Activated CD8-positive, alpha-beta T cell treated with anti-CD3 and anti-CD28 coated beads, Interleukin-2, amount 10 ng/mL, durations not matched to agents 7 days and 5 days (primary cell): ENCODE measurements at regions of chr1 and their contacts with region 1.

Region 1: DNA sequence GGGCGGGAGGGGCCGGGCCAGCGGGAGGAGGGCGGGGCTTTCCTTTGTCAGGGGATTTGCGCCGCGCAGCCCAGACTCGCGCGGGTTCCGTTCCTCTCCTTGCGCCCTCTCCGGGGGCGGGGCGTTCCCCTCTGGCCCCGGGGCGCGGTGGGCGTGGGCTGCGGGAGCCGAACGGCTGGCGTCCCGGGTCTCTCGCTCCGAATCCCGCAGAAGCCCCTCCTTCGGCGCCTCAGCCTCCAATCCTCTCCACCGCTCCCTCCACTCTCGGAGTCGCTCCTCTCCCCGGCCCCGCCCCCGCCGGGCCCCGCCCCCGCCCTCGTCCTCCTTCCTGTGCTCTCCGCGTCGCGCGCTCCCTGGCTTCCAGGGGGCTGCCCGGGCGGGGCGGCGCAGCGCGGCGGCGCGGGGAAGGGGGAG is 82.8 kb upstream of the BMP8A start:
- DNase-seq: peak; percentile 89
- ATAC-seq: peak; percentile 89
- H3K4me3 Mint-ChIP-seq: peak overlapping the region; percentile 84
- H3K27ac Mint-ChIP-seq: no peak overlapping the region
- H3K4me1 Mint-ChIP-seq: peaks cover 51% of the 10 kb centered on the region
- H3K27me3 Mint-ChIP-seq: no peaks in the 10 kb centered on the region

Region 2: GRCh38 chr1:39391691-39392679 is 16.7 kb before region 1 on chr1:
- CTCF ChIA-PET with region 1: interaction called, 66 read pairs
- POLR2A ChIA-PET with region 1: no interaction called
- DNase-seq: no peak
- ATAC-seq: no peak
- H3K4me3 Mint-ChIP-seq: no peak overlapping the region
- H3K27ac Mint-ChIP-seq: no peak overlapping the region
- H3K4me1 Mint-ChIP-seq: peaks cover 54% of the 10 kb centered on the region
- H3K27me3 Mint-ChIP-seq: no peaks in the 10 kb centered on the region

Region 3: DNA sequence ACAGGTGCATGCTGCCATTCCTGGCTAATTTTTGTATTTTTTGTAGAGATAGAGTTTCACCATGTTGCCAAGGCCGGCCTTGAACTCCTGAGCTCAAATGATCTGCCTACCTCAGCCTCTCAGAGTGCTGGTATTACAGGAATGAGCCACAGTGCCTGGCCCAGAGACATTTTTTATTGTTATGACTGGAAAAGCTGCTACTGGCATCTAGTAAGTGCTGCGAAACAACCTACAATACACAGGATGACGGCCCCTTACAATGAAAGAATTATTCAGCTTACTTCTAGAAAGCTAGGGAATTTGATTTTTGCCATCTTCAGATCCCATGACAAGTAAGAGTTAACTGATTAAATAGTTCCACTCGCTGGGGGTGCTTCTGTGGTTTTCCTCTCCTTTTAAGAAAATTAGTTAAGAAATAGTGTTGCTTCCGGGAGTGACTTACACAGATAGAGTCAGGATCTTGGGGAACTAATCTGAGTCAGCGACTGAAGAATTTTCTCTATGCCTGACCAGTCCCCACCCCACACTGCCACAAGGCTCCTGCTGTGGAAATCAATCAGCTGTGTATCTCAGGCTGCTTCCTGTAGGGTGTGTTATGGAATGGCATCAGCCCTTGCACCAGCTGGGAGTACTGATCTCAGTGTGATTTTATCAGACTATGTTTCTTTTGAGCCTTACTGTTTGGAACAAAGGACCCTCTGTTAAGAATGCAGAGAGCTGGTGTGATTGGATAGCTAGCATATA is 10.2 kb before region 1 on chr1:
- CTCF ChIA-PET with region 1: interaction called, 66 read pairs
- POLR2A ChIA-PET with region 1: no interaction called
- DNase-seq: no peak
- ATAC-seq: peak; percentile 60
- H3K4me3 Mint-ChIP-seq: no peak overlapping the region
- H3K27ac Mint-ChIP-seq: peak overlapping the region; percentile 60
- H3K4me1 Mint-ChIP-seq: peaks cover 45% of the 10 kb centered on the region
- H3K27me3 Mint-ChIP-seq: no peaks in the 10 kb centered on the region

Region 4: GRCh38 chr1:39422614-39423013 is 14.0 kb after region 1 on chr1:
- CTCF ChIA-PET with region 1: interaction called, 35 read pairs
- POLR2A ChIA-PET with region 1: no interaction called
- DNase-seq: no peak
- ATAC-seq: no peak
- H3K4me3 Mint-ChIP-seq: no peak overlapping the region
- H3K27ac Mint-ChIP-seq: no peak overlapping the region
- H3K4me1 Mint-ChIP-seq: no peaks in the 10 kb centered on the region
- H3K27me3 Mint-ChIP-seq: no peaks in the 10 kb centered on the region